T-cell (primary cell): ENCODE measurements at regions of chr17 and their contacts with region 1.

Region 1: DNA sequence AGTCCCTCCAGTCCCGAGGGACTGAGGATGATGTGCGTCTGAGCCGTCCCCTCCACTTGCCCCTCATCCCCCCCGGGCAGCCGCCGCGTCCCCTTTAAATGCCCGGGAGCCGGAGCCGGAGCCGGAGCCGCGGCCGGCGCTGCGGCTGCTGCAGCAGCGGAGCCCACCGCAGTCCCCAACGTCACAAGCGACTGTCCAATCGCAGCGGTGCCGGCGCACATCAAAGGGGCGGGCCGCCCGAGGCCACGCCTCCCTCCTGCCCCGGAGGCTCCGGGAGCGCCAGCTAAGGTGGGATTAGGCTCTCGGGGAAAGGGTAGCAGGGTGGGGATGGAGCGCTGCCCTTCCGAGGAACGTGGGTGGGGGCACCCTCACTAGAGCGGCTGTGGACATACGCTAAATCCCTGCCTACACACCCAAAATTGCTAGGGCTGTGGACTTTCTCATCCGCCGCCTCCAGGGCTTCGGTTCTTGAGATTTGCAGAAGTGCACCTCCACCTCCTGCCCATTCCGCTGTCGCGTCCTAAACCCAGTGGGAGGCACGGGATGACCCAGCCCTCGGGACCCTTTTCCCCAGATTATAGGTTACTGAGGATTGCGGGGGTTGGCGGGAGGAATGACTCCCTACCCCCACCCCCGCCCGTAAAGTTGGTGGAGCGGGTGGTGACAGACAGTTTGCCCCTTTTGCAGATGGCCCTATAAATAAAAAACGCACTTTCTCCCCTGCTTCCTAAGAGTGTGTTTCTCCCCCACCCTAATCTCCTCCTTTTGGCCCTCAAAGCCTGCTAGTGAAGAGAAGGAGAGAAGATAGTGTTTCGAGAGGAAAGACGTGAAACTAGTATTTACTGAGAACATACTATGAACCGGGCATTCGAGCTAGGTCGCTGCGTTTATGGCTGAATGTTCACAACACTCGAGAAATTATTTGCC is at the start of gene PHOSPHO1:
- DNase-seq: peak; percentile 69 to 93 (median 83)
- ATAC-seq: peak; percentile 93 to 98 (median 95)
- H3K4me3 ChIP-seq: peak within 1 kb of the TSS; percentile 51 to 77
- H3K4me3 Mint-ChIP-seq: peak within 1 kb of the TSS; percentile 83 to 87 (median 85)
- H3K27ac ChIP-seq: no peak within 1 kb of the TSS
- H3K27ac Mint-ChIP-seq: no peak within 1 kb of the TSS
- H3K4me1 ChIP-seq: peaks cover 0 to 26% of the 10 kb centered on the region in 2 experiments
- H3K4me1 Mint-ChIP-seq: peaks cover 14 to 19% (median 17%) of the 10 kb centered on the region in 3 donors
- H3K27me3 ChIP-seq: peaks cover 0 to 32% of the 10 kb centered on the region in 2 experiments
- H3K27me3 Mint-ChIP-seq: peaks cover 3 to 20% of the 10 kb centered on the region in 2 donors
- total RNA-seq, gene PHOSPHO1: 0.13 TPM in 1 of 5 donors, not detected in the others

Region 2: GRCh38 chr17:47288531-47289116 is 1942.3 kb before region 1 on chr17:
- CTCF ChIA-PET with region 1: interaction called in 1 of 2 experiments, 11 read pairs
- POLR2A ChIA-PET with region 1: no interaction called
- DNase-seq: no peak
- ATAC-seq: no peak
- H3K4me3 ChIP-seq: no peak overlapping the region
- H3K4me3 Mint-ChIP-seq: no peak overlapping the region
- H3K27ac ChIP-seq: no peak overlapping the region
- H3K27ac Mint-ChIP-seq: no peak overlapping the region
- H3K4me1 ChIP-seq: no peaks in the 10 kb centered on the region
- H3K4me1 Mint-ChIP-seq: peaks cover 0 to 3% (median 0%) of the 10 kb centered on the region in 3 donors
- H3K27me3 ChIP-seq: peaks cover 0 to 4% of the 10 kb centered on the region in 2 experiments
- H3K27me3 Mint-ChIP-seq: peaks cover 4 to 9% of the 10 kb centered on the region in 2 donors

Region 3: GRCh38 chr17:49180303-49180702 is 50.6 kb before region 1 on chr17:
- CTCF ChIA-PET with region 1: interaction called, 7 to 11 read pairs
- POLR2A ChIA-PET with region 1: no interaction called
- DNase-seq: peak in 33 of 35 experiments; percentile 5 to 83 (median 53)
- ATAC-seq: peak in 2 of 4 experiments; percentile 33 to 61
- H3K4me3 ChIP-seq: no peak overlapping the region
- H3K4me3 Mint-ChIP-seq: peak overlapping the region in 1 of 3 donors; percentile 31
- H3K27ac ChIP-seq: no peak overlapping the region
- H3K27ac Mint-ChIP-seq: no peak overlapping the region
- H3K4me1 ChIP-seq: peaks cover 0 to 6% of the 10 kb centered on the region in 2 experiments
- H3K4me1 Mint-ChIP-seq: peaks cover 0 to 5% (median 4%) of the 10 kb centered on the region in 3 donors
- H3K27me3 ChIP-seq: peaks cover 0 to 10% of the 10 kb centered on the region in 2 experiments
- H3K27me3 Mint-ChIP-seq: peaks cover 1 to 4% of the 10 kb centered on the region in 2 donors

Region 4: GRCh38 chr17:49191917-49192741 is 38.8 kb before region 1 on chr17:
- CTCF ChIA-PET with region 1: interaction called, 4 to 21 read pairs
- POLR2A ChIA-PET with region 1: no interaction called
- DNase-seq: peak; percentile 63 to 99 (median 88)
- ATAC-seq: peak; percentile 60 to 65 (median 64)
- H3K4me3 ChIP-seq: peak overlapping the region; percentile 80 to 87
- H3K4me3 Mint-ChIP-seq: peak overlapping the region; percentile 83 to 96 (median 89)
- H3K27ac ChIP-seq: peak overlapping the region; percentile 91
- H3K27ac Mint-ChIP-seq: peak overlapping the region; percentile 95 to 99
- H3K4me1 ChIP-seq: peaks cover 4 to 27% of the 10 kb centered on the region in 2 experiments
- H3K4me1 Mint-ChIP-seq: peaks cover 23 to 35% (median 31%) of the 10 kb centered on the region in 3 donors
- H3K27me3 ChIP-seq: no peaks in the 10 kb centered on the region
- H3K27me3 Mint-ChIP-seq: no peaks in the 10 kb centered on the region

Region 5: GRCh38 chr17:49201481-49201927 is 29.4 kb before region 1 on chr17:
- CTCF ChIA-PET with region 1: interaction called, 3 to 16 read pairs
- POLR2A ChIA-PET with region 1: no interaction called
- DNase-seq: no peak
- ATAC-seq: no peak
- H3K4me3 ChIP-seq: no peak overlapping the region
- H3K4me3 Mint-ChIP-seq: no peak overlapping the region
- H3K27ac ChIP-seq: no peak overlapping the region
- H3K27ac Mint-ChIP-seq: no peak overlapping the region
- H3K4me1 ChIP-seq: no peaks in the 10 kb centered on the region
- H3K4me1 Mint-ChIP-seq: peaks cover 0 to 2% (median 0%) of the 10 kb centered on the region in 3 donors
- H3K27me3 ChIP-seq: no peaks in the 10 kb centered on the region
- H3K27me3 Mint-ChIP-seq: no peaks in the 10 kb centered on the region

Region 6: GRCh38 chr17:49508061-49508865 is 277.4 kb after region 1 on chr17:
- CTCF ChIA-PET with region 1: no interaction called
- POLR2A ChIA-PET with region 1: no interaction called
- DNase-seq: no peak
- ATAC-seq: no peak
- H3K4me3 ChIP-seq: no peak overlapping the region
- H3K4me3 Mint-ChIP-seq: no peak overlapping the region
- H3K27ac ChIP-seq: no peak overlapping the region
- H3K27ac Mint-ChIP-seq: no peak overlapping the region
- H3K4me1 ChIP-seq: no peaks in the 10 kb centered on the region
- H3K4me1 Mint-ChIP-seq: no peaks in the 10 kb centered on the region
- H3K27me3 ChIP-seq: peaks cover 0 to 73% of the 10 kb centered on the region in 2 experiments
- H3K27me3 Mint-ChIP-seq: peaks cover 23 to 56% of the 10 kb centered on the region in 2 donors